Tibial artery (tissue), 4 donors: ENCODE measurements at regions of chr6 and their contacts with region 1.

Region 1: DNA sequence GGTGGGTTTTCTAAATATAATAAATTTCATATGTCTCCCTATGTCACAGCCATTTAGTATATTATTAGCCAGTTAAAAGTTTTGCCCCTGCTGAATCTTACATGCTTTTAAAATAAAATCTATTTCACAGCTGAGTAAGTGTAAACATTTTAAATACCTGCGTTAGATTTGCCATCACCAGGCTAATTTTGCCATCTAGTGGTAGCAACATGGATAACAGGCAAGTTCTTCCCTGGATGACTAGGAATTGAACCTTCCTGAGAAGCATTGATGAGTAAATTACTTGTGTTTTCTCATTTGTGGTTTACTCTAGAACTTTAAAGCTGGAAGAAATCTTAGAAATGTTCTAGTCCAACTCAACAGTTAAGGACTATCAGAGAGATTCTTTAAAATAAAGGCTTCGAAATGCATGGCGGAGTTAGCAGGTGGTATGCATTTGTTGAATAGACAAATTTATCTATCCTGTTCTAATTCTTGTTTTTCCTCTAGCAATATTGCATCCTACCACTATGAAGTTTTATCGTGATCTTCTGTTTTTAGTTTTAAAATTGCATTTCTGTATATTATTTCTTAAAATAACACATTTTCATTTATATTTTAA is 2.6 kb downstream of the PRSS35 start:
- DNase-seq: no peak
- H3K4me3 ChIP-seq: no peak overlapping the region
- H3K27ac ChIP-seq: no peak overlapping the region
- H3K4me1 ChIP-seq: peaks cover 0 to 40% (median 6%) of the 10 kb centered on the region in 4 donors
- H3K27me3 ChIP-seq: no peaks in the 10 kb centered on the region
- CTCF ChIP-seq: peak; percentile 79 to 83

Region 2: DNA sequence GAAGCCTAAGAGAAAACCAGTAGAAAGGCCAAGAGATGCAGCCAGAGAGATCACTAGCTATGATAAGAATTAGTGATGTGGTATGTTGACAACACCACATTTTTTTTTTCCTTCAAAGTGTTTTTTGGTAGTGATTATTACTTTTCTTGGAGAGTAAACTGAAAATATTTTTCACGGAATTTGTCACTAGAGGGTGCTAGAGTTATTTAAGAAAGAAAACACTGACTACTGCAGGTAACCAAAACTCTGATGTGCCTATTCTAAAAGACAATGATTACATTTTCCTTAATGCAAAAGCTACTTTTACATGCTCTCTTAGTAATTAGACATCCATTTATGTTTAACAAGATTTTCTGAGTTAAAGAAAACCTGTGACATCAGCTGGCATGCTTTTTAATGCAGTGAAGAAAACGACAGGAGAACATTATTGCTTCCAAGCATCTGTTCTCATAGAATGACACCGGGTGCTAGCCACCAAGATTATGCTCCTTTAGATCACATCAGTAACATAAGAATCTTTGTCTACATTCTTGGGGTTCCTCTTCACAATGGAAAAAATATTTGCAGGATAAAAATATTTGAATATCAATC is 293.0 kb before region 1 on chr6:
- intact Hi-C with region 1: loop called (anchors 5 kb)
- DNase-seq: no peak
- H3K4me3 ChIP-seq: no peak overlapping the region
- H3K27ac ChIP-seq: no peak overlapping the region
- H3K4me1 ChIP-seq: peaks cover 0 to 17% (median 1%) of the 10 kb centered on the region in 4 donors
- H3K27me3 ChIP-seq: no peaks in the 10 kb centered on the region
- CTCF ChIP-seq: peak; percentile 45 to 58

Region 3: GRCh38 chr6:83417880-83418663 is 96.9 kb before region 1 on chr6:
- intact Hi-C with region 1: loop called (anchors 2 kb)
- DNase-seq: no peak
- H3K4me3 ChIP-seq: no peak overlapping the region
- H3K27ac ChIP-seq: no peak overlapping the region
- H3K4me1 ChIP-seq: no peaks in the 10 kb centered on the region
- H3K27me3 ChIP-seq: no peaks in the 10 kb centered on the region
- CTCF ChIP-seq: peak; percentile 71 to 77

Region 4: DNA sequence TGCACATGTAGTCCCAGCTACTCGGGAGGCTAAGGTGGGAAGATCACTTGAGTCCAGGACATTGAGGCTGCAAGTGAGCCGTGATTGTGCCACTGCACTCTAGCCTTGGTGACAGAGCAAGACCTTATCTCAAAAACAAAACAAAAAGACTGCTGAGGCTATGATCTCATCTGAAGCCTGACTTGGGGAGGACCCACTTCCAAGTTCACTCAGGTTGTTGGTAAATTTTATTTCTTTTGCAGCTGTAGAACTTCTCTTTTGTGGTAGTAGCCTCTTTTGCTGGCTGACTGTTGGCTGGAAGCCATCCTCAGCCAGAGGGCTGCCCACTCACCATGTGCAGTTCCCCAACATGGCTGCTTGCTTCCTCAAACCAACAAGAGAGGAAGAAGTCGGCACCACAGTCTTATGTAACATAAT is 47.3 kb before region 1 on chr6:
- intact Hi-C with region 1: no loop called
- DNase-seq: peak; percentile 73 to 74
- H3K4me3 ChIP-seq: no peak overlapping the region
- H3K27ac ChIP-seq: no peak overlapping the region
- H3K4me1 ChIP-seq: no peaks in the 10 kb centered on the region
- H3K27me3 ChIP-seq: no peaks in the 10 kb centered on the region
- CTCF ChIP-seq: no peak

Region 5: GRCh38 chr6:83781506-83781905 is 266.5 kb after region 1 on chr6:
- intact Hi-C with region 1: no loop called
- DNase-seq: no peak
- H3K4me3 ChIP-seq: no peak overlapping the region
- H3K27ac ChIP-seq: no peak overlapping the region
- H3K4me1 ChIP-seq: no peaks in the 10 kb centered on the region
- H3K27me3 ChIP-seq: no peaks in the 10 kb centered on the region
- CTCF ChIP-seq: no peak